Activated CD4-positive, alpha-beta memory T cell treated with anti-CD3 and anti-CD28 coated beads, Interleukin-2, amount 10 ng/mL, durations not matched to agents 7 days and 5 days (primary cell): ENCODE measurements at regions of chr14 and their contacts with region 1.

Region 1: DNA sequence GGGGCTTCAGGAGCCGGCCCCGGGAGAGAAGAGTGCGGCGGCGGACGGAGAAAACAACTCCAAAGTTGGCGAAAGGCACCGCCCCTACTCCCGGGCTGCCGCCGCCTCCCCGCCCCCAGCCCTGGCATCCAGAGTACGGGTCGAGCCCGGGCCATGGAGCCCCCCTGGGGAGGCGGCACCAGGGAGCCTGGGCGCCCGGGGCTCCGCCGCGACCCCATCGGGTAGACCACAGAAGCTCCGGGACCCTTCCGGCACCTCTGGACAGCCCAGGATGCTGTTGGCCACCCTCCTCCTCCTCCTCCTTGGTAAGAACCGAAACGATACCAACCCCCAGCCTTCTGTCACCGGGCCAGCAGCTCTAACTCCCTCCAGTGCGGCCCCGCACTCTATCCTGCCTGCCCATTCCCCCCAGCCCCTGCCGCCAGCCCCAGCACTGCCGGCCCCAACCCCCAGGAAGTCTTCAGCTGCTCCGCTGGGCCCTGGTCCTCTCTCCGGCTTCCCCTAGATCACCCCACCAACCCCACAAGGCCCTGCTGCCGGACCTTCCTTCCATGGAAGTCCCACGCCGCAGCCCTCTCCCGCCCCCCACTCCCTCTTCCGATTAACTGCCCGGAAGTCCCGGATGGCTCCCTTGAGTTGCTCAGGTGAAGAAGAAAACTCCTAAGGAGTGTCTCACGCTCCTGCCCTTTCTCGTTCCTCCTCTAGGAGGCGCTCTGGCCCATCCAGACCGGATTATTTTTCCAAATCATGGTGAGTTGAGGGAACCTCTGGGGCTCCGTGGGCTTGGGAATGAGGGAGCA is 693 bp downstream of the LRP10 start:
- DNase-seq: peak; percentile 76
- H3K4me3 Mint-ChIP-seq: peak overlapping the region; percentile 86
- H3K27ac Mint-ChIP-seq: peak overlapping the region; percentile 97
- H3K4me1 Mint-ChIP-seq: peaks cover 39% of the 10 kb centered on the region
- H3K27me3 Mint-ChIP-seq: no peaks in the 10 kb centered on the region

Region 2: DNA sequence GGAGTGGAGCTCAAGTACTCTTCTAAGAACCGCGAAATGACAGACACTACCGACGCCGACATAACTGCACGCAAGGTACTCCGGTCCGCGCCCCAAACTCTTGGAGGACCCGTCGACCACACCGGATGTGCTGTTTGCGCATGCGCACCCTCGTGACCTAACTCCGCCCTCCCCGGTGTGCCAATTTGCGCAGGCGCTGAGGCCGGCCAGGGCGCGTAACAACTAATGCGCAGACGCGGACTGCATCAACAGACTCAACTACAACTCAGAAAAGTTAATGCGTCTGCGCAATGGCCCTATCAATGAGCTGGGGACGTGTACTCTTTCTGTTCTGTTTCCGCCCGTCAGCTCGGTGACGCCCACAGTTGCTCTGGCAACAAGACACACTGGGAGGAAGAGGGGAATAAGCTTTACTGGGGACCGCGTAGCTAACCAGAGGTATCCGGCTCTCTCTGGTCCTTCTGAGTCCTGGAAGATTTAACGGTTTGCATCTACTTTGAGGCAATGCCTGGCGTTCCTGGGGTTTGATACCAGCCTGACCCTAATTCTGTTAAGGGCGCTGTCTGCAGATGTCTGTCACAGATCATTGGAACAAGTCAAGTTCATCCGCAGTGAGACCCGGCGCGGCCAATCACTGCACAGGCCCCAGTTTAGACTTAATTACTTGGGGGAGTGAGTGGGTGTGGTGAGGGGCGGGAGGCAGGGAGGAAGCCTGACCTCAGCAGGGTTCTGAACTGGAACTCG is 283.0 kb before region 1 on chr14 and contains the start of gene DAD1:
- CTCF ChIA-PET with region 1: interaction called, 4 read pairs
- POLR2A ChIA-PET with region 1: interaction called, 14 read pairs
- DNase-seq: peak; percentile 100
- H3K4me3 Mint-ChIP-seq: peak within 1 kb of the TSS; percentile 93
- H3K27ac Mint-ChIP-seq: peak within 1 kb of the TSS; percentile 98
- H3K4me1 Mint-ChIP-seq: peaks cover 55% of the 10 kb centered on the region
- H3K27me3 Mint-ChIP-seq: peaks cover 6% of the 10 kb centered on the region
- total RNA-seq, gene DAD1: 160 to 167 TPM

Region 3: GRCh38 chr14:22829661-22830442 is 42.4 kb before region 1 on chr14 and contains the start of gene MRPL52:
- CTCF ChIA-PET with region 1: interaction called, 12 read pairs
- POLR2A ChIA-PET with region 1: interaction called, 23 read pairs
- DNase-seq: peak; percentile 93
- H3K4me3 Mint-ChIP-seq: peak within 1 kb of the TSS; percentile 87
- H3K27ac Mint-ChIP-seq: peak within 1 kb of the TSS; percentile 90
- H3K4me1 Mint-ChIP-seq: peaks cover 33% of the 10 kb centered on the region
- H3K27me3 Mint-ChIP-seq: no peaks in the 10 kb centered on the region
- total RNA-seq, gene MRPL52: 108 to 119 TPM

Region 4: GRCh38 chr14:22886500-22887259 is 14.4 kb after region 1 on chr14:
- CTCF ChIA-PET with region 1: interaction called, 145 read pairs
- POLR2A ChIA-PET with region 1: interaction called, 115 read pairs
- DNase-seq: peak; percentile 85
- H3K4me3 Mint-ChIP-seq: peak overlapping the region; percentile 84
- H3K27ac Mint-ChIP-seq: peak overlapping the region; percentile 89
- H3K4me1 Mint-ChIP-seq: peaks cover 44% of the 10 kb centered on the region
- H3K27me3 Mint-ChIP-seq: peaks cover 23% of the 10 kb centered on the region

Region 5: DNA sequence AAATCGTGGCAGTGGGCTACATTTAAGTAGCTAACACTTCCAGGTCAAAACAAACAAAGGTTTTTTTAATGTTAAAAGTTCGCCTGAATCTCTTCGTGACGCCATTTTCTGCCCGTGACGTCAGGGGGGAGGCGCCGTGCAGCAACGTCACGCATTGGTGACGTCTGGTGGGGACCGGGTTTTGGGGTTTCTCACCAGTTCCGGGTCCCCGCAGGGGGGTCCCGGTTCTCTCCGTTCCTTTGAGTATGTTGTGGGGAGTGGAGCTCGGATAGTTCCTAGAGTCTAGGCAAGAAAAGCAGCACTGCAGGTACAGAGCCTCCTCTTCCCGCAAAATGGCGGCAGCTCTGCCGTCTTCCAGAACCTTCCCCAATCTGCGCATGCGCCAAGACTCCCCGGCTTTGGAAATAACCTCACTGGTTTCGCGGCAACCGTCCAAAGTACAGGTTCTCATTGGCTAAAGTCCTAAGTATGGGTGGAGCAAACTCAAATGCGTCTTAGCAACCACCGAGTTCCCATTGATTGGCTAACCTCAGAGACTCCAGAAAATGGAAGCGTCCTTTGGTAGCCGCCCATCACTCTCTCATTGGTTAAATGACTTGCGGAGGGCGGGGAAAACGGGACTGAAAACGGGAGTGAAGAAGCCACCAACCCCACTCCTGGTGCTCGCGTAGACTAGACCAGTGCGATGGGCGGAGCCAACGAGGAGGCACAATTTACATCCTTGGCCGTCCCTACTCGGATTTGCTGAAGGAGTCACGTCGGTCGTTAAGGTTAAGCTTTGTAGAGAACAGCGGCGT is 46.8 kb after region 1 on chr14 and contains the start of gene RBM23:
- CTCF ChIA-PET with region 1: interaction called, 12 read pairs
- POLR2A ChIA-PET with region 1: interaction called, 28 read pairs
- DNase-seq: peak; percentile 100
- H3K4me3 Mint-ChIP-seq: peak within 1 kb of the TSS; percentile 90
- H3K27ac Mint-ChIP-seq: peak within 1 kb of the TSS; percentile 98
- H3K4me1 Mint-ChIP-seq: peaks cover 42% of the 10 kb centered on the region
- H3K27me3 Mint-ChIP-seq: no peaks in the 10 kb centered on the region
- total RNA-seq, gene RBM23: 71.8 to 73.5 TPM

Region 6: DNA sequence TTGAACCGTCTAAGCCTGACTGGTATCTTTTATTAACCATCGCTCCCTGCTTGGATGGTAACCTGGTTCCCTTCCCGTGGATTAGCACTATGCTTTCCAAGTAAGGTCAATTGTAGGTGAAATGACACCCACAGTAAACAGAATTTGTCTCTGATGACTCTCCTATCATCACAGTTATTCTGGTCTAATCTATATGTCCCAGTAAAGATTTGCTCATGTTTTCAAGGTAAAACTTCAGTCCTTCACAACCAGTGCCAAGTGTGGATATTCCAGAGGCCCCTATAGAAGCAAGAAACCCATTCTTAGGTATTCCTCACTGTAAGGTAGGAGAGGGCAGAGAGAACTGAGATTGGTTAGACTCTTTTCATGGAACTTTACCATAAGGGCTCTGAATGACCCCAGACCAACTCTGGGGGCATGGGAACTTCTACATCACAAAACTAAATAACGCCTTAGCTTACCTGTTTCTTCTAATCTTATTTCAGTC is 94.6 kb after region 1 on chr14:
- CTCF ChIA-PET with region 1: no interaction called
- POLR2A ChIA-PET with region 1: no interaction called
- DNase-seq: no peak
- H3K4me3 Mint-ChIP-seq: no peak overlapping the region
- H3K27ac Mint-ChIP-seq: no peak overlapping the region
- H3K4me1 Mint-ChIP-seq: no peaks in the 10 kb centered on the region
- H3K27me3 Mint-ChIP-seq: peaks cover 4% of the 10 kb centered on the region